Motor neuron (in vitro differentiated cells): ENCODE measurements at regions of chr20 and their contacts with region 1.

Region 1: DNA sequence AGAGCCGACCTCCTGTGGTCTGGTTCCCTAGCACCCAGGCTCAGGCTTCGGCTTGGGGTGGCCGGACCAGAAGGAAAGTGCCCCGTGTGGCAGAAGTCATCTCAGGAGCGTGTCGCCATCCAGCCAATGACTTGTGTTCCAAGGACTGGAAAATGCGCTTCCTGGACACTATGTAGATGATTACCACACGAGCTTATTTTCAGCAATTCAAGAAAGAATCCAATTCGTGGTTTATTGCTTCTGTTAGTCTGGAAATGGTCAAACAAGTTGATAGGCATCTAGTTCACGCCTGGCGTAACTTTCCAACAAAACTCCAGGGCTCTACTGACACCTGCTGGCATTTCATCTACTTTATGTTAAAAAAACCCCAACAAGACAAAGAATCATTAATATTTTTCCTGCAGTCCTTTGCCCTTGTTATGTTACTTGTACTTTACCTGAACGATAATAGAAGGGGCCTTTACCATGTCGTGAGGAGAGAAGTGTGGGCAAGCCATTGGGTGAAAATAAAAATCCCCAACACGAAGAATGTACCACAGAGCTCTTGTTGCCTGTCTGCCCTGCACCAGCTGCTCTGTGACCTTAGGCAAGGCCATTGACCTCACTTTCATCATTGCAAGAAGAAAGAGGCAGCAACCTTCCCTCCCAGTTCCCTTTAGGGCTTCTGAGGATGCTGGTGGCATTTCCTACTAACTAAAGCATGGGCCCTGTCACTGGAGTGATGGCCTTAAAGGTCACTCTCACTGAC is 154.7 kb upstream of the LAMP5 start:
- ATAC-seq: peak in 7 of 8 experiments; percentile 18 to 89 (median 55)
- H3K4me3 ChIP-seq: no peak overlapping the region
- H3K27ac ChIP-seq: no peak overlapping the region
- H3K4me1 ChIP-seq: peaks cover 5 to 6% of the 10 kb centered on the region in 2 donors

Region 2: DNA sequence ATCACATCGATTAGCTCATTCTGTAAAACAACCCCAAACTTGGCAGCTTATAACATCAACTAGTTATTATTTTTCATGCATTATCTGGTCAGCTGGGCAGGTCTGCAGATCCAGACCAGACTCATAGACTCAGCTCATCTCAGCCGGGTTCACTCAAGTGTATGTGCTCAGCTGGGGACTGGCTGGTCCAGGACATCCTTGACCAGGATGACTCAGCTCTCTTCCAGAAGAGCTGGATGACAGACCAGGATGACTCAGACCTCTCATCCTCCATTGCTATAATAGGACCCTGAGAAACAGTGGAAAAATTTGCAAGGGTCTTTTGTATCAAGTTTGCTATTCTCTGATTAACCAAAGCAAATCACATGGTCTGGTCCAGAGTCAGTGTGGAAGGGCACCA is 603.3 kb before region 1 on chr20:
- in situ Hi-C with region 1: loop called in 5 of 9 experiments (anchors 10 to 25 kb)
- ATAC-seq: peak in 7 of 8 experiments; percentile 88 to 99 (median 92)
- H3K4me3 ChIP-seq: no peak overlapping the region
- H3K27ac ChIP-seq: no peak overlapping the region
- H3K4me1 ChIP-seq: peaks cover 0 to 5% of the 10 kb centered on the region in 2 donors

Region 3: GRCh38 chr20:8790442-8791074 is 569.2 kb before region 1 on chr20:
- in situ Hi-C with region 1: loop called in 2 of 9 experiments (anchors 25 kb)
- ATAC-seq: peak in 5 of 8 experiments; percentile 23 to 50 (median 36)
- H3K4me3 ChIP-seq: no peak overlapping the region
- H3K27ac ChIP-seq: no peak overlapping the region
- H3K4me1 ChIP-seq: peaks cover 5 to 9% of the 10 kb centered on the region in 2 donors

Region 4: GRCh38 chr20:8853805-8854338 is 505.9 kb before region 1 on chr20:
- in situ Hi-C with region 1: loop called in 1 of 9 experiments (anchors 25 kb)
- ATAC-seq: peak; percentile 86 to 98 (median 94)
- H3K4me3 ChIP-seq: no peak overlapping the region
- H3K27ac ChIP-seq: no peak overlapping the region
- H3K4me1 ChIP-seq: peaks cover 0 to 6% of the 10 kb centered on the region in 2 donors

Region 5: GRCh38 chr20:9093218-9093957 is 266.3 kb before region 1 on chr20:
- in situ Hi-C with region 1: loop called in 1 of 9 experiments (anchors 25 kb)
- ATAC-seq: no peak
- H3K4me3 ChIP-seq: no peak overlapping the region
- H3K27ac ChIP-seq: no peak overlapping the region
- H3K4me1 ChIP-seq: peaks cover 10 to 24% of the 10 kb centered on the region in 2 donors